Spleen (tissue), 13 donors: ENCODE measurements at regions of chr12 and their contacts with region 1.

Region 1: DNA sequence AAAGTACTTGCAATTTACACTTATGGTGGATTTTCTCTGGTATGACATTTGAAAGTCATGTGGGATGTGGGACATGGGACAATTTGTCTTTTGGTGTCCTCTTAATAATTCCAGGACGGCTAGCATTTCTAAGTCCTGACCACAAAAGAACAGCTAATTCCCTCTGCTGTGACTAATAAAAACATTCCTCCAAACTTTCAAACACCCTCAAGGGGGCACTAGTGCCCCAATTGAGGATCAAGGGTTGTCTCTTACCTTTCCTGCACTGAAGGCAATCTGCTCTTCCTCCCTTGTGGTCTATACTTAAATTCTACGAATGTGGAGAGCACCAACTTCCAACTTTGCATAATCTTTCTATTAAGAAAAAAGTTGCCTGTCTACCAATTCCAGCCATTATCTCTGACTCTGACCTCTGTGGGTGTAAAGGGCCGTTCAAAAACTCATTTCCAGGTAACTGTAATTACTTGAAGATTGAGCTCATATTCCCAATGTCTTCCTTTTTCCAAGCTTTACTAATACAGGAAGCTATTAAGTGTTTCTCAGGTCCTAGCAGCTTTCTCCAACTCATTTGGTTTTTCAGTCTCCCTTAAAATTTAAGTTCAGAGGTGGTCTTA is 210.2 kb downstream of the PTPRO start:
- DNase-seq: no peak
- H3K4me3 ChIP-seq: no peak overlapping the region
- H3K27ac ChIP-seq: no peak overlapping the region
- H3K4me1 ChIP-seq: peaks cover 0 to 23% (median 7%) of the 10 kb centered on the region in 6 donors
- H3K27me3 ChIP-seq: no peaks in the 10 kb centered on the region
- CTCF ChIP-seq: peak in 10 of 11 experiments; percentile 26 to 68 (median 51)
- POLR2A ChIP-seq: no peak

Region 2: DNA sequence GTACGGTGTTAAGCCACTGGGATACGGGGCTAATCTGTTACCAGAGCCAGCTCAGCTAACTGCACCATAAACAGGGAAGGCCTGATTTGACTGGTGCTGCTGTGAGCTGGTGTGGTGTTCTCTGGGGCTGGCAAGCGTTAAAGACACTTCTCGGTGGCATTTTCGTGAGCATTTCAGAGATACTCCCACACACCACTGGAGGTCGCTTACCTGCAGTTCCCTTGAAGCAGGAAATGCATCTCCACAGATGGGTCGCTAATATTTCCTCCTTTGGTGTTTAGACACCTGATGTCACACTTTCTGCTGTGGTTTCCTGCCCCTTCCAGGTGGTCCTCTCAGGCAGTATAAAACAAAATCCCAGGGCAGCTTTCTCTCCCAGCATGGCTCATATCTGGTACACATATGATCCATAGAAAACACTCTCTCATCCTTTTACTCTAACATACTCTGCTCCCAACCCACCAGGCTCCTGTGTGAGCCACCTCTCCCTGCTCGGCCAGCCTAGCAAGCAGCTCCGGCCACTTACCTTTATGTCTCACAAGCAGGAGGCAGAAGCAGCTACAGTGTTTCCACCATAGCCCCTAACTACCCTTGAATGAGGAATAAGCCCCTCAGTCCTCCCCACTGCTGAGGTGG is 1421.1 kb before region 1 on chr12:
- intact Hi-C with region 1: no loop called
- DNase-seq: no peak
- H3K4me3 ChIP-seq: no peak overlapping the region
- H3K27ac ChIP-seq: no peak overlapping the region
- H3K4me1 ChIP-seq: peaks cover 0 to 9% (median 2%) of the 10 kb centered on the region in 6 donors
- H3K27me3 ChIP-seq: no peaks in the 10 kb centered on the region
- CTCF ChIP-seq: peak in 10 of 11 experiments; percentile 4 to 55 (median 40)
- POLR2A ChIP-seq: no peak

Region 3: GRCh38 chr12:15494329-15495046 is 38.0 kb before region 1 on chr12:
- intact Hi-C with region 1: no loop called
- DNase-seq: no peak
- H3K4me3 ChIP-seq: no peak overlapping the region
- H3K27ac ChIP-seq: no peak overlapping the region
- H3K4me1 ChIP-seq: peaks cover 0 to 4% (median 0%) of the 10 kb centered on the region in 6 donors
- H3K27me3 ChIP-seq: peaks cover 0 to 5% (median 0%) of the 10 kb centered on the region in 7 donors
- CTCF ChIP-seq: no peak
- POLR2A ChIP-seq: no peak

Region 4: DNA sequence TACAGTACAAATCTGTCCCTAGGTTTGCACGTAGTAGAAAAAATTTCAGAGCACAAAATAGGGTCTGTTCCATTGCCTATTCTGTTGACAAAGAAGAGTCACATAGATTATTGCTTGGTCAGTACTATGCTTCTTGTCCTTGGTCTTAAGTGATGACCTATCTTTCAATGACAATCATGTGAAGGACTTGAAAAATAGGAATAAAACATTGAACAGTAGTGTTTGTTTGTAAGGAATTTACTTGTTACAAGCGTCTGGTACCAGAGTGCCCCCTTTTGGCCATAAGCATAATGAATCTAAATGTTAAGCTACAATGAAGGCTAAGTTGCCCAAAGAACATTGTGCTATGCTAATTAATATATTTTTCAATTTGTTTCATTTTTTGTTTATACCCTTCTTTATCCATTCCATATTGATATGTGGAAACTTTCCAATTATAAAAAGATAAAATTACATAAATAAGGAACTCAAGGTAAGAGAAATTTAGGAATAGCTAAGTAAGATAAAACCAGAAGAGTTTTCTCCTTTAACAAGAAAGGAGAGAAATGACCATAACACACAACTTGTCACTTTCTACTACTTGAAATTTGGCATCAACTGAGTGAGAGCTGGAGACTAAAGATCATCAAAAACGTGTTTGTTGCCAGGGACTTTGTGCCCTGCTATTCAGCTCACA is 52.0 kb after region 1 on chr12:
- intact Hi-C with region 1: loop called (anchors 10 kb)
- DNase-seq: no peak
- H3K4me3 ChIP-seq: no peak overlapping the region
- H3K27ac ChIP-seq: no peak overlapping the region
- H3K4me1 ChIP-seq: no peaks in the 10 kb centered on the region
- H3K27me3 ChIP-seq: no peaks in the 10 kb centered on the region
- CTCF ChIP-seq: peak; percentile 9 to 70 (median 57)
- POLR2A ChIP-seq: no peak